ENCODE measurements at regions of chr14 and their contacts with region 1.

Region 1: DNA sequence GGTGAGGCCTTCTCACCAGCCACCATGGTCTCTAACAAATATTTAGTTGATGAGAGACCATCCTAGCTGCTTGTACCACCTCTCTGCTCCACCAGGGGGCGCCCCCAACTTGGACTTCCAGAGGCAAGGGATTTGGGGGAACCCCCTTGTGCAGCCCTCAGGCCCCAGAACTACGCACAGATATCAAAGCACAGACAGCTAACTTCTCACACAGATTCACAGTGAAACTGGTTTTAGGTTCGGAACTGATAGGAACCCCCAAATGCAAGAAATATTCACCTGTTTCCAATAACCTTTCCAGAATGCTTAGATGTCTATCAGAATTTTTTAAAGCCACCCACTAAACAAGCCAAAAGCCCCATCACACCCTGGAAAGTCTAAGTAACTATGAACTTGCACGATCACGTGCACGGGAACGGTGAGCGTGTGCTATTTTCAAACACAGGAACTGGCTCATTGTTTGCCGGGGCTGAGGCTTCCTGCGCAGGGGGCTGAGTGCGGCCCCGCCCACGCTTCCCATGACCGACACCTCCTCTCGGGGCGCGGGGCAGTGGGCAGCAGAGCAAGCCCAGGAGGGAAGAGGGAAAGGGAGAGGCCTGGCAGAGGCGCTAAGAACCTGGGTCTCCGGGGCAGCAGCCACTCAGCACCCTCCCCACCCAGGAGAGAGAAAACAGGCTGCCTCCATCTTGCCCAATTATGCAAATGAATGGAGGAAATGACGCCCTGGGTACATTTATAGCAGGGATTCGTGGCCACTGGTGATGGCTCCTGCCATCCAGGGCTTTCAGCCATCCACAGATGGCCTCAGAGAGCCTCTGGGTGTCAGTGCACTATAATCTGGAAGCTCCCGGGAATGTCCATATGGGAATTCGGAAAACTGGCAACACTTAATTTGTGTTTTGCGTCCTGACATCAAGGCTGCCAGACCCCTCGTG is 79.4 kb upstream of the GPR68 start:
- DNase-seq: peak; percentile 94
- ATAC-seq: peak; percentile 90
- H3K4me3 ChIP-seq: peak overlapping the region; percentile 44
- H3K27ac ChIP-seq: peak overlapping the region; percentile 71
- H3K4me1 ChIP-seq: peaks cover 38% of the 10 kb centered on the region
- H3K27me3 ChIP-seq: no peaks in the 10 kb centered on the region
- CTCF ChIP-seq: peak; percentile 99

Region 2: DNA sequence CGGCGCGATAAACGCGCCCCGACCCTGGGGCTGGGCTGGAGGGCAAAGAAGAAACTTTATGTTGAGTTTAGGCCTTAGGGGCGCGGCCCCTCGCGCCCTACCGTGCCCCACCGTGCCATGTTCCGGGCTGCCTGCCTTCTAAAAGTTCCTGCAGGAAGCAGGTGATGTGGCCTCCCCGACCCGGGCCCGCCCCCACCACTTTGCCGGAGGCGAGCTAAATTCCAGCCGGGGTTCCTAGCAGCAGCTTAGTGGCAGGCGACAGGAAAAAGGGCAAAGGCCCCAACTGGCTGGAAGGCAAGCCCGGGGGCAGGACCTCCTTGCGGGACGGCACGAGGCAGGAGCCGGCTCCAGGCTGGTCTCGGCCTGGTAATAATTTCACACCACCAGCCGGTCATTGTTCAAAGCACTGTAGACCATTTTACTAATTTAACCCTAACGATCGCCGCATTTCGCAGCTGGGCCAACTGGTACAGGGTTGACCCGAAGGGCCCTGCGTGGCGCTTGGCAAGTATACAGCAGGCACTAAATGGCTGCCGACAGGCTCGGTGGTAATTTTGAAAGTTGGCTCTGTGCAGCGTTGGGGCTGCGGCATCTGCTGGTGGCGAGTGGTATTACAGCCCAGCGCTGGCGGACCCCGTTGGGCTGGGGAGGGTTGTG is 94.6 kb after region 1 on chr14:
- intact Hi-C with region 1: loop called (anchors 5 kb)
- DNase-seq: peak; percentile 86
- ATAC-seq: peak; percentile 81
- H3K4me3 ChIP-seq: peak overlapping the region; percentile 80
- H3K27ac ChIP-seq: peak overlapping the region; percentile 30
- H3K4me1 ChIP-seq: peaks cover 21% of the 10 kb centered on the region
- H3K27me3 ChIP-seq: no peaks in the 10 kb centered on the region
- CTCF ChIP-seq: peak; percentile 98